Activated naive CD8-positive, alpha-beta T cell treated with anti-CD3 and anti-CD28 coated beads, Interleukin-2, amount 10 ng/mL, durations not matched to agents 7 days and 5 days (primary cell): ENCODE measurements at regions of chr16 and their contacts with region 1.

Region 1: DNA sequence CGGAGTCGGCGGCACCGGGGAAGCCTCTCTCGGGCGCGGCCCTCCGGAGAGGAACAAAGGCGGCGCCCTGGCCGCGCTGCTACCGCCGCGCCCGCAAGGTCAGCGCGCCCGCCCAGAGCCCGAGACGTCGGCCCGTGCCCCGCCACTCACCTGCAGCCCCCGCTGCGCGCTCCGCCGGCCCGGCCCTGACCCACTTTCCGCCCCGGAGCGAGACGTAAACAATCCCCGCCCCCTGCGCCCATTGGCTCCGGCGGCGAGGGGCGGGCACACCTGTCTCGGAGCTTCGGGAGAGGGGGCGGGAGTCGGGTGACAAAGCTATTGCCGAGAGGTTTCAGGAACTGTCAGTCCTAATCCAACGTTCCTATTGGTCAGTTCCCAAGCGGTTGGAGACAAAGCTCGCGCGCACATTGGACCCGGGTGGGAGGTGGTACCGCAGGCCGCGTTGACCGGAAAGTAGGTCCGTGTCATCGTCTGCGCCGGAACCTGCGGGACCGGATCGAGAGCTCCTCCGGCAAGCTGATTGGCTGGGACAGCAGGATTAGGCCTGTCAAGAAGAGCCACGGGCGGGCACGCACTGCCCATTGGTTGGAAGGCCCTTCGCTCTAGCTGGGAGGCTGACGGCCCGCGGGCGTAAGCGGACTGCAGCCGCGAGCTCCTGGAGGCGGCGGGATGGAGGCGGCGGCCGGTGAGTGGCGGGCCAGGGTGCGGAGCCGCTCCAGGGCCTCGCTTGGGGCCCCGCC is at the starts of genes NUBP2 and SPSB3:
- DNase-seq: peak; percentile 94
- ATAC-seq: peak; percentile 91
- H3K4me3 Mint-ChIP-seq: peak within 1 kb of the TSS; percentile 91
- H3K27ac Mint-ChIP-seq: peak within 1 kb of the TSS; percentile 85
- H3K4me1 Mint-ChIP-seq: peaks cover 17% of the 10 kb centered on the region
- H3K27me3 Mint-ChIP-seq: no peaks in the 10 kb centered on the region
- total RNA-seq, gene NUBP2: 55.6 to 55.9 TPM
- total RNA-seq, gene SPSB3: 67.8 to 74.1 TPM

Region 2: DNA sequence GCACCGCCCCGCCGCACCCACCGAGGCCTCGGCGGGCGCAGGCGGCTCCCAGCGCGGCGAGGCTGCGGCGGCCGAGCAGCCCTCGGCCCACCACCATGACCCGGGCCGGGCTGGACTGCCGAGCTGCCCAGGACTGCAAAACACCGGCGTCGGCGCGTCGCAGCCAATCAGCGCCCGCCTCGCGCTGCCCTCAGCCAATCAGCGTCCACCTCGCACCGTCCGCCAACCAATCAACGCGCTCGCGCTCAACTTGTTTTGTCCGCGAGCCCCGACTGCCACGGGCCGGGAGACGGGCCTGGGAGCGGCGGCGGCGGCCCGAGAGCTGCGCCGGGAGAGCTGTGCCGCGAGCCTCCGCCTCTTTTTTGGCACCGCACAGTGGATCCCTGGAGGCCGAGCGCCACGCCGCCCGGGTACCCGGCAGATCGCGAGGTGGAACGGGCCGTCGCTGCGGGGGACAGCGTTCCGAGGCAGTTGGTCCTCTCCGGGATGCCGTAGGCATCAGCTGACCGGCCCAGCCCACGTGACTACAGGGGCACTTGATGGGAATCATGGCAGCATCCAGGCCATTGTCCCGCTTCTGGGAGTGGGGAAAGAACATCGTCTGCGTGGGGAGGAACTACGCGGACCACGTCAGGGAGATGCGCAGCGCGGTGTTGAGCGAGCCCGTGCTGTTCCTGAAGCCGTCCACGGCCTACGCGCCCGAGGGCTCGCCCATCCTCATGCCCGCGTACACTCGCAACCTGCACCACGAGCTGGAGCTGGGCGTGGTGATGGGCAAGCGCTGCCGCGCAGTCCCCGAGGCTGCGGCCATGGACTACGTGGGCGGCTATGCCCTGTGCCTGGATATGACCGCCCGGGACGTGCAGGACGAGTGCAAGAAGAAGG is 44.4 kb after region 1 on chr16 and contains the starts of genes FAHD1 and HAGH:
- POLR2A ChIA-PET with region 1: interaction called, 15 read pairs
- DNase-seq: peak; percentile 95
- ATAC-seq: peak; percentile 87
- H3K4me3 Mint-ChIP-seq: peak within 1 kb of the TSS; percentile 94
- H3K27ac Mint-ChIP-seq: peak within 1 kb of the TSS; percentile 88
- H3K4me1 Mint-ChIP-seq: peaks cover 18% of the 10 kb centered on the region
- H3K27me3 Mint-ChIP-seq: no peaks in the 10 kb centered on the region
- total RNA-seq, gene FAHD1: 12.0 to 12.2 TPM
- total RNA-seq, gene HAGH: 48.7 to 51.6 TPM

Region 3: GRCh38 chr16:1929578-1930337 is 147.2 kb after region 1 on chr16:
- POLR2A ChIA-PET with region 1: interaction called, 10 read pairs
- DNase-seq: peak; percentile 99
- ATAC-seq: peak; percentile 96
- H3K4me3 Mint-ChIP-seq: peak overlapping the region; percentile 56
- H3K27ac Mint-ChIP-seq: no peak overlapping the region
- H3K4me1 Mint-ChIP-seq: peaks cover 2% of the 10 kb centered on the region
- H3K27me3 Mint-ChIP-seq: peaks cover 11% of the 10 kb centered on the region